ENCODE measurements at regions of chr2 and their contacts with region 1.

Region 1: GRCh38 chr2:197399887-197400540 is 34.8 kb downstream of the SF3B1 start:
- DNase-seq: no peak
- ATAC-seq: no peak
- H3K4me3 ChIP-seq: no peak overlapping the region
- H3K4me3 Mint-ChIP-seq: no peak overlapping the region
- H3K27ac ChIP-seq: no peak overlapping the region
- H3K27ac Mint-ChIP-seq: no peak overlapping the region
- H3K4me1 ChIP-seq: no peaks in the 10 kb centered on the region
- H3K4me1 Mint-ChIP-seq: no peaks in the 10 kb centered on the region
- H3K27me3 ChIP-seq: no peaks in the 10 kb centered on the region
- H3K27me3 Mint-ChIP-seq: no peaks in the 10 kb centered on the region
- CTCF ChIP-seq: no peak

Region 2: GRCh38 chr2:197097578-197098366 is 302.2 kb before region 1 on chr2:
- CTCF ChIA-PET with region 1: no interaction called
- POLR2A ChIA-PET with region 1: no interaction called
- intact Hi-C with region 1: loop called (anchors 5 kb)
- DNase-seq: no peak
- ATAC-seq: no peak
- H3K4me3 ChIP-seq: no peak overlapping the region
- H3K4me3 Mint-ChIP-seq: no peak overlapping the region
- H3K27ac ChIP-seq: no peak overlapping the region
- H3K27ac Mint-ChIP-seq: peak overlapping the region; percentile 28
- H3K4me1 ChIP-seq: no peaks in the 10 kb centered on the region
- H3K4me1 Mint-ChIP-seq: no peaks in the 10 kb centered on the region
- H3K27me3 ChIP-seq: no peaks in the 10 kb centered on the region
- H3K27me3 Mint-ChIP-seq: no peaks in the 10 kb centered on the region
- CTCF ChIP-seq: no peak